K562 (cell line): ENCODE measurements at regions of chr14 and their contacts with region 1.

Region 1: DNA sequence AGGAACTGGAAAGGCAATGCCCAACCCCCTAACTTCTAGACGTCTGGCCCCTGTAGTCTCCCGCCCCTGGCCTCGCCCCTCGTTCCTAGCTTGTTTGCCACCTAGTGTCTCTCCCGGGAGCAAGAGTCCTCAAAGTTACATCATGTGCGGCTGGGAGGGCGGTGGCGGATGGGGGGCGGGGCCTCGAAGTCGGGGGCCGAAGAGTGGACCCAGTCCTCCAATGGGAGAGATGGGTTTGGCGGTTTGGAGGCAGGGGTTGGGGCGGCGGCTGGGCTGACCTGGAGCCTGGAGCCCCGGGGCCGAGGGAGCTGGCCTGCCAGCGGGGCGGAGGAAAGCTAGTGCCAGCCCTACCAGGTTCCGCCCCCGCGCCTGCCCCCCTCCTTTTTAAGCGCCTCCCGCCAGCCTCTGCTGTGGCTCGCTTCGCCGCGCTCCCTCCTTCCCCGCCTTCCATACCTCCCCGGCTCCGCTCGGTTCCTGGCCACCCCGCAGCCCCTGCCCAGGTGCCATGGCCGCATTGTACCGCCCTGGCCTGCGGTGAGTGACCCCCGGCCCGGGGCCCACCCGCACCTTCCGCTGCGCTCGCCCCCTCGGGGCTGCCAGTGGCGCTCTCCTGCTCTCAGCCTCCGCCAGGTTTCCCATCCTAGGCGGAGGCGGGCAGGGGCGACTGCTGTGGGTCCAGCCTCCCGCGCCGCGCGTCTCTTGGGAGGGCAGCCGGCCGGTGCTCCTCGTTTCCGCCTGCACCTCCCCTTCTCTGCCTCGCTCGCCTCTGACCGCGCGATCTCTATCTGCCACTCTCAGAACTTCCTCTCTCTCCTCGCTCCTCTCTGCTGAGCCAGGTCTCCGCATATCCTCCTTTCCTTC is at the start of gene PCK2:
- DNase-seq: peak; percentile 92 to 97 (median 96)
- ATAC-seq: peak; percentile 92
- H3K4me3 ChIP-seq: peak within 1 kb of the TSS; percentile 99
- H3K27ac ChIP-seq: peak within 1 kb of the TSS; percentile 98
- H3K4me1 ChIP-seq: peaks cover 20 to 22% of the 10 kb centered on the region in 2 experiments; a peak in 4 of 5 replicates
- H3K27me3 ChIP-seq: no peaks in the 10 kb centered on the region
- CTCF ChIP-seq: no peak
- EP300 ChIP-seq: no peak
- POLR2A ChIP-seq: peak; percentile 93
- RAD21 ChIP-seq: no peak
- polyA plus RNA-seq, gene PCK2: 3.3 to 6.6 TPM

Region 2: GRCh38 chr14:24013654-24014514 is 80.2 kb before region 1 on chr14:
- CTCF ChIA-PET with region 1: interaction called, 4 read pairs
- POLR2A ChIA-PET with region 1: no interaction called
- in situ Hi-C with region 1: loop called (anchors 5 kb)
- intact Hi-C with region 1: loop called (anchors 10 kb)
- DNase-seq: peak; percentile 59 to 69 (median 60)
- ATAC-seq: peak; percentile 83
- H3K4me3 ChIP-seq: no peak overlapping the region
- H3K27ac ChIP-seq: no peak overlapping the region
- H3K4me1 ChIP-seq: no peaks in the 10 kb centered on the region; a peak in 1 of 5 replicates
- H3K27me3 ChIP-seq: no peaks in the 10 kb centered on the region
- CTCF ChIP-seq: peak; percentile 65 to 83 (median 66)
- EP300 ChIP-seq: no peak
- POLR2A ChIP-seq: no peak
- RAD21 ChIP-seq: peak; percentile 82 to 84

Region 3: GRCh38 chr14:24058260-24058950 is 35.7 kb before region 1 on chr14:
- CTCF ChIA-PET with region 1: interaction called, 10 read pairs
- POLR2A ChIA-PET with region 1: interaction called, 6 read pairs
- in situ Hi-C with region 1: loop called (anchors 5 kb)
- intact Hi-C with region 1: loop called (anchors 1 kb)
- DNase-seq: peak in 2 of 4 experiments; percentile 59 to 64
- ATAC-seq: peak; percentile 92
- H3K4me3 ChIP-seq: no peak overlapping the region
- H3K27ac ChIP-seq: no peak overlapping the region
- H3K4me1 ChIP-seq: peaks cover 0 to 6% of the 10 kb centered on the region in 2 experiments; a peak in 3 of 5 replicates
- H3K27me3 ChIP-seq: peaks cover 0 to 19% of the 10 kb centered on the region in 2 experiments; a peak in 2 of 5 replicates
- CTCF ChIP-seq: peak; percentile 72 to 82 (median 76)
- EP300 ChIP-seq: no peak
- POLR2A ChIP-seq: no peak
- RAD21 ChIP-seq: peak; percentile 83 to 92

Region 4: GRCh38 chr14:24080888-24081738 is 13.0 kb before region 1 on chr14:
- CTCF ChIA-PET with region 1: no interaction called
- POLR2A ChIA-PET with region 1: interaction called, 40 read pairs
- in situ Hi-C with region 1: no loop called
- intact Hi-C with region 1: no loop called
- DNase-seq: peak; percentile 79 to 86 (median 84)
- ATAC-seq: peak; percentile 94
- H3K4me3 ChIP-seq: peak overlapping the region; percentile 53
- H3K27ac ChIP-seq: peak overlapping the region; percentile 77
- H3K4me1 ChIP-seq: peaks cover 18 to 34% of the 10 kb centered on the region in 2 experiments
- H3K27me3 ChIP-seq: no peaks in the 10 kb centered on the region
- CTCF ChIP-seq: 0 out of 6 replicates have a peak, but pooled peaks of 1 of the 3 experiments have one; percentile 0
- EP300 ChIP-seq: no peak
- POLR2A ChIP-seq: peak; percentile 68
- RAD21 ChIP-seq: no peak

Region 5: DNA sequence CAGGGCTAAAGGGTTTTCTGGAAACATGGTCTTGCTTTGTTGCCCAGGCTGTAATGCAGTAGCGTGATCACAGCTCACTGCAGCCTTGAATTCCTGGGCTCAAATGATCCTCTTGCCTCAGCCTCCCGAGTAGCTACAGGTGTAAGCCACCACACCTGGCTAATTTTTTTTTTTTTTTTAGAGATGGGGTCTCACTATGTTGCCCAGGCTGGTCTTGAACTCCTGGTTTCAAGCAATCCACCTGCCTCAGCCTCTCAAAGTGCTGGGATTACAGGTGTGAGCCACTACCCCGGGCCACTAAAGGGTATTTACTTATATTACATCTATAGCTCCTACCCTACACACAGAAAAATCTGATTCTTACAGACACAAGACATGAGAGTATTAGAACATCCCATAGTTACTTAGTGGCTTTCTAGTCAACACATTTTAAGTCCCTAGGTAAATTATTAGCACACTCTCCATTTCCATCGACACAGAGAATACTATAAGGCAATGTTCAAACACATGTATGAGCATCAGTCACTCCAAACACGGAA is 14.3 kb after region 1 on chr14:
- CTCF ChIA-PET with region 1: no interaction called
- POLR2A ChIA-PET with region 1: interaction called, 29 read pairs
- in situ Hi-C with region 1: no loop called
- intact Hi-C with region 1: no loop called
- DNase-seq: no peak
- ATAC-seq: no peak
- H3K4me3 ChIP-seq: no peak overlapping the region
- H3K27ac ChIP-seq: no peak overlapping the region; the same call in 2 of the 3 replicates
- H3K4me1 ChIP-seq: peaks cover 0 to 3% of the 10 kb centered on the region in 2 experiments; a peak in 2 of 5 replicates
- H3K27me3 ChIP-seq: no peaks in the 10 kb centered on the region
- CTCF ChIP-seq: no peak
- EP300 ChIP-seq: no peak
- POLR2A ChIP-seq: no peak
- RAD21 ChIP-seq: no peak

Region 6: DNA sequence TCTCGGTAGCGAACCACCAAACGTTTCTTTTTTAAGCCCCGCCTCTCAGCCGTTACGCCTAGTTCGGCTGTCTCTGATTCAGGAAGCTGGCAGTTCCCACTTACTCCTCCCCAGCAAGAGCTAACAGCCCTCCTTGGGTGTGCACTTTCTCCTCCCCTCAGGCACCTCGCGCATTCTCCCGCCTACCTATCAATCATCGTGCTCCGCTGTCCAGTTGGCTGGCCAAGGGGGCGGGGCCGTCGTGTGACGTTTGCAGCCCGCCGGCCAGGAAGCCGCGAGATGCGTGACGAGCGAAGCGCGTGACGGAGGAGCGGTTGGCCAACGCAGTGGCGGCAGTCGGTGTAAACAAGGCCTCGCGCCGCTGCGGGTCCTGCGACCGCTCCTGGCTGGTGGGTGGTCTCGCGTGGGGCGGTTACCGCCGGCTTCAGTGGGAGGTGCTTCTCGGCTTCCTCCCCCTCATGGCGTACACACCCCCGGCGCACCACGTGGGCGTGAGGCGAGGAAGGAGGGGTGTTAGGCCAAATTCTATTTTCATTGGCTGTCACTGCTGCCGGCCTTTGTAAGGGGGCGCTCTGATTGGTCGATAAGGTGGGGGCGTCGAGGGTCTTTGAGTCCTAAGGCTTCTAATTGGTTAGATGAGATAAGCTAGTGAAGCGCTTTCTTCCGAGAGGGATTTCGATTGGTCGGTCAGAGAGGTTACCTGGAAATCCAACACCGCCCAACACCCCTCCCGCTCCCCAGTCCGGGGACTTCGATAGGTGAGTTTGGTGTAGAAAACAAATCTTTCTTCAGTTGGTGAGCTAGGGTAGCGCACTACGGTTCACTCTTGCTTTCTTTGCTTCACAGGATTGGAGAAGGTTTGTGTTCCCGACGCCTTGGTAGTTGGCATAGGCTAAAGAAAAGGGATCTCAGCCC is 20.7 kb after region 1 on chr14 and contains the starts of genes DCAF11 and NRL:
- CTCF ChIA-PET with region 1: no interaction called
- POLR2A ChIA-PET with region 1: interaction called, 5 read pairs
- in situ Hi-C with region 1: no loop called
- intact Hi-C with region 1: loop called (anchors 2 kb)
- DNase-seq: peak; percentile 88 to 97 (median 93)
- ATAC-seq: peak; percentile 91
- H3K4me3 ChIP-seq: peak within 1 kb of the TSS; percentile 51
- H3K27ac ChIP-seq: peak within 1 kb of the TSS; percentile 95
- H3K4me1 ChIP-seq: peaks cover 10% of the 10 kb centered on the region in 2 experiments; a peak in 4 of 5 replicates
- H3K27me3 ChIP-seq: no peaks in the 10 kb centered on the region
- CTCF ChIP-seq: no peak
- EP300 ChIP-seq: no peak; the same call in 1 of the 2 replicates
- POLR2A ChIP-seq: no peak
- RAD21 ChIP-seq: no peak
- polyA plus RNA-seq, gene DCAF11: 8.5 to 9.2 TPM
- polyA plus RNA-seq, gene NRL: 0.07 TPM in 1 of 2 experiments, not detected in the other

Region 7: GRCh38 chr14:24141097-24141880 is 47.2 kb after region 1 on chr14 and contains the start of gene EMC9:
- CTCF ChIA-PET with region 1: no interaction called
- POLR2A ChIA-PET with region 1: interaction called, 4 read pairs
- in situ Hi-C with region 1: no loop called
- intact Hi-C with region 1: loop called (anchors 10 kb)
- DNase-seq: peak; percentile 94 to 98 (median 95)
- ATAC-seq: peak; percentile 95
- H3K4me3 ChIP-seq: peak within 1 kb of the TSS; percentile 83
- H3K27ac ChIP-seq: peak within 1 kb of the TSS; percentile 87
- H3K4me1 ChIP-seq: peaks cover 31 to 43% of the 10 kb centered on the region in 2 experiments; a peak in 4 of 5 replicates
- H3K27me3 ChIP-seq: no peaks in the 10 kb centered on the region
- CTCF ChIP-seq: peak in 2 of 3 experiments; percentile 32 to 35; a peak in 2 of 6 replicates
- EP300 ChIP-seq: no peak
- POLR2A ChIP-seq: peak; percentile 74
- RAD21 ChIP-seq: no peak
- polyA plus RNA-seq, gene EMC9: 3.1 to 4.5 TPM